Panc1 (cell line): ENCODE measurements at regions of chr10 and their contacts with region 1.

Region 1: DNA sequence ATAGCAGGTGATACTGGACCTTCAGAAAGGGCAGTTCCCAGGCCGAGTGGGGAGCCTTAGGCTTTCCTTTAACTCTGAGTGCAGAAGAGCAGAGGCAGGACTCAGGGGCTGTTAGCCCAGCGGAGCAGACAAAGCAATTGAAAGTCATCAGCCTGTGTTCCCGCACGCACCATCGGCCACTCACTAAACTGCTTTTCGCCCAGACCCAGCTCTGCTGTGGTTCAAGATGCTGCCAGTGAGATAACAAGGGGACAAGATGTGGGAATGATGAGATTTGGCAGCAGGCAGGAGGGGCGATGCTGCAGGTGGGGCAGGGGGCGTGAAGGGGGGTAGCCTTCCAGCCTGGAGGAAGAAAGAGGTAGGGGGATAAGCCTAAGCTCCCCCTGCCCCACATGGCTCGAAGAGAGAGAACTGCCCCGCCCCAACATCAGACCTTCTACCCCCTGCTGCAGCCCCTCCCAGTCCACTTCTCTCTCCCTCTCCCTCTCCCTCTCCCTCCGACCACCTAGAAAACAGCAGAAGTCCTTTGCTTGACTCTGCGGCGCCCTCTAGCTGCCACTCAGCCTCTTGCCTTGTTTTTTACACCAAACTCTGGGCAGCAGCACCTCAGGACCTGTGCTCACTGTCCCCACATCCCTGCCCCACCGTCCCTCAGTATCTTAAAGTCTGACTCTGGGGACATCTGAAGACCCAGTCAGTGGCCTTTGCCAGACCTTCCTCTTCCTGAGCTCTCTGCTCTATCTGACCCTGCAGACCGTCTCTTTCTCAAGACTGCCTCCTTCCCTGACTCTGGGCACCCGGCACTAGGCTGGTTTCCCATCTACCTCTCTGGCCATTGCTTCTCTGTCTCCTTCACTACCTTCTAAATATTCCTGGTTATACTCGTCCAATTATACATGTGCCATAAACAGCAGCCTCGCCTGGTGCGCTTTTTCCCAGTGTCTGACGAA is 110.5 kb downstream of the C10orf105 start:
- DNase-seq: no peak
- ATAC-seq: peak; percentile 75
- H3K4me3 ChIP-seq: no peak overlapping the region
- H3K27ac ChIP-seq: no peak overlapping the region
- H3K4me1 ChIP-seq: no peaks in the 10 kb centered on the region
- H3K27me3 ChIP-seq: no peaks in the 10 kb centered on the region; the same call in 1 of the 2 replicates
- CTCF ChIP-seq: peak; percentile 97

Region 2: GRCh38 chr10:71314028-71314693 is 294.9 kb before region 1 on chr10:
- CTCF ChIA-PET with region 1: no interaction called
- POLR2A ChIA-PET with region 1: no interaction called
- in situ Hi-C with region 1: no loop called
- intact Hi-C with region 1: loop called (anchors 5 kb)
- DNase-seq: peak; percentile 43
- ATAC-seq: peak; percentile 78
- H3K4me3 ChIP-seq: peak overlapping the region; percentile 23 to 38
- H3K27ac ChIP-seq: peak overlapping the region; percentile 67; the same call in 1 of the 2 replicates
- H3K4me1 ChIP-seq: peaks cover 3% of the 10 kb centered on the region
- H3K27me3 ChIP-seq: no peaks in the 10 kb centered on the region; the same call in 1 of the 2 replicates
- CTCF ChIP-seq: peak; percentile 98

Region 3: DNA sequence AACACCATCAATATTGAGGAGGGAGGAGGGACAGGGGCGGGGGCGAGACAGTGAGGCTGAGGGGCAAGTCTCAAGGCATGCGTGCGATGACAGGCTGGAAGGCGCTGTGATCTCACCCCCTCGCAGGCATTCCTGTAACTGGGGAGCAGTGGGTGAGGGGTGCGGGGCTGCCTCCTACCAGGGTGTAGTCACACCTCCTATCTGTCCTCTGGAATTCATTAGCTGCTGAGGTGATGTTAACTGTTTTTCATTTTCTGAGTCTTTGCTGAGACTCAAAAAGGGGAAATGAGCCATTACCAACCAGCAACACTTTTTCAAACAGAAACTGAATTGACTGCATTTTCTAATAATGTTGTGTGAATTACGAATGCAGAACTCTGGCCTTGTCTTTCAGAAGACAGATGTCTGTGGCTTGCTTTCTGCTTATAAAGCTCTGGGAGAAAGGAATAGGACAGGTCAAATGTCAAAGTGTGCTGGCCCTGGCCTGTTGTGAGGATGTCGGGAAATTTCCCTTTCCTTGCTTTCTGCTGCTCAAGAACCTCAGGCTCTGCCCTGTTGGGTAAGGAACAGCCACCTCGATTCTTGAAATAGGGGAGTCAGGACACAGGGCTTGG is 236.1 kb before region 1 on chr10:
- CTCF ChIA-PET with region 1: interaction called, 19 read pairs
- POLR2A ChIA-PET with region 1: no interaction called
- in situ Hi-C with region 1: no loop called
- intact Hi-C with region 1: no loop called
- DNase-seq: no peak
- ATAC-seq: no peak
- H3K4me3 ChIP-seq: no peak overlapping the region
- H3K27ac ChIP-seq: no peak overlapping the region
- H3K4me1 ChIP-seq: peaks cover 7% of the 10 kb centered on the region; the same call in 1 of the 2 replicates
- H3K27me3 ChIP-seq: peaks cover 8% of the 10 kb centered on the region; the same call in 1 of the 2 replicates
- CTCF ChIP-seq: no peak

Region 4: DNA sequence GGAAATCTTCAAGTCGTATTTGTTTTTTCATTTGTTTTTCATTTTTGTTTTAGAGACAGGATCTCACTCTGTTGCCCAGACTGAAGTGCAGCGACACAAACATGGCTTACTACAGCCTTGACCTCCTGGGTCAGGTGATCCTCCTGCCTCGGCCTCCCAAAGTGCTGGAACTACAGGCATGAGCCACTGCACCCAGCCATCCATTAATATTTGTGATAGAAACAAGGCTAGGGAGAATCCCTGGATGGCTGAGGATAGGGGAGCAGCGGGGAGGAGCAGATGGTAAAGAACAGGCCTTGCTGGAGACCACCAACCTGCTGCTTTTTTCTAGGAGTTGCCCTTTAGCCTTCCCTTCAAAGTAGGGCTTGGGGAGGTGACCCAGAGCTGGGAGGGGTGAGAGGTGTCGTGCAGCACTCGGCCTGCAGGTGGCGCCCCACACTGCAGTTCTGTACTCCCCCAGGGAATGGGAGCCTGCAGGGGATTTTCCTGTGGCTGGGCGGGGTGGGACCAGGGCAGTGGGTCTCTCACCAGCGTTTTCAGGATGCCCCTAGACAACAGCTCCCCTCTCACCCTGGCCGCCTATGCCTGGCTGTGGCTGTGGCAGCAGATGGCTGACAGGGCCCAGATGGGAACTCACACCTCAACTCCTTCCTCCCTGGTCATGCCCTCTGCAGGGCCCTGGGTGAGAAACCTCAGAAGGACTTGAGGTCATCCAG is 225.0 kb before region 1 on chr10:
- CTCF ChIA-PET with region 1: interaction called, 10 read pairs
- POLR2A ChIA-PET with region 1: no interaction called
- in situ Hi-C with region 1: no loop called
- intact Hi-C with region 1: loop called (anchors 2 kb)
- DNase-seq: peak; percentile 45
- ATAC-seq: peak; percentile 96
- H3K4me3 ChIP-seq: no peak overlapping the region
- H3K27ac ChIP-seq: no peak overlapping the region
- H3K4me1 ChIP-seq: no peaks in the 10 kb centered on the region
- H3K27me3 ChIP-seq: peaks cover 2% of the 10 kb centered on the region; the same call in 1 of the 2 replicates
- CTCF ChIP-seq: peak; percentile 99

Region 5: GRCh38 chr10:71623098-71623985 is 14.2 kb after region 1 on chr10:
- CTCF ChIA-PET with region 1: interaction called, 16 read pairs
- POLR2A ChIA-PET with region 1: no interaction called
- in situ Hi-C with region 1: no loop called
- intact Hi-C with region 1: no loop called
- DNase-seq: no peak
- ATAC-seq: peak; percentile 82
- H3K4me3 ChIP-seq: no peak overlapping the region
- H3K27ac ChIP-seq: no peak overlapping the region; the same call in 1 of the 2 replicates
- H3K4me1 ChIP-seq: peaks cover 23% of the 10 kb centered on the region
- H3K27me3 ChIP-seq: no peaks in the 10 kb centered on the region
- CTCF ChIP-seq: no peak; the same call in 1 of the 2 replicates

Region 6: DNA sequence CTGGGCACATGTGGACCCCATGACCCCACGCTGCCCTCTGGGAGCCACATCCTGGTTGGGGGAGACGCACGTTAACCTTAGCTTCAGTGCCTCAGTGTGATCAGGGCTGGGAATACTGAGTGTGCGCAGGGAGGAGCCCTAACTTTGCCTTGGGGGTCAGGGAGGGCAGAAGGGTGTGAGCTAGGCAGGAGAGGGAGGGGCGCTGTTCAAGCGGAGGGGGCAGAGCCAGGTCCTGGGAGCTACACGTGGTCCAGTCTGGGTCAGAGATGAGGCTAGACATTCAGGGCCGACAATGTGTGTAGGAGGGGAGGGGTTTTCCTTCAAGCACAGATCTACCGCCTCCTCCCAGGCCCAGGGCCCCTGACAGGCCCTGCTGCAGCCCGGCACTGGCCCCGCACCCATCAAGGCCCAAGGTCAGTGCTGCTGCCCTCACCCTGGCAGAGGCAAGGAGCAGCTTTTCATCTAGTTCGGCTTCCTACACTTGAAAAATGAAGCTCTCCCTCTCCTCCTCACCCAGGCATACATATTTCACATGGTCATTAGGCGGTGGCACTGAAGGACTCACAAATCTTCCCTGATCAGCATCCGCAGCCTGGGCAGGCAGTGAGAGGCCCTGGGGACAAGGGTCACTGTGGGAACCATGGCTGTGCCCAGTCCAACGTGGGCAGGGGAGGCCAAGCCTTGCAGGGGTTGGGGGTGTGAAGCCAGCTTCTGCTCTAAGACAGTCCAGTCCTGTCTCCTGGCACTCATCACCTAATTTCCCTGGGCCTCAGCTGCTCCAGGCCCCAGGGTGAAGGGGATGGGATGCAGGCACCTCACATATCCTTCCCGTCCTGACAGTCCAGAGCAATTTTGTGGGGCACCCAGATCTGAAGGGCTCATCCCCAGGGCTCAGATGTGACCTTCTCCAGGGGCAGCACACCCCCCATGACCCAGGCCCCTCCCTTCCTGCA is 63.2 kb after region 1 on chr10:
- CTCF ChIA-PET with region 1: no interaction called
- POLR2A ChIA-PET with region 1: no interaction called
- in situ Hi-C with region 1: no loop called
- intact Hi-C with region 1: no loop called
- DNase-seq: no peak
- ATAC-seq: peak; percentile 51
- H3K4me3 ChIP-seq: no peak overlapping the region
- H3K27ac ChIP-seq: no peak overlapping the region
- H3K4me1 ChIP-seq: no peaks in the 10 kb centered on the region
- H3K27me3 ChIP-seq: no peaks in the 10 kb centered on the region
- CTCF ChIP-seq: no peak

Region 7: GRCh38 chr10:71805776-71806703 is 196.9 kb after region 1 on chr10:
- CTCF ChIA-PET with region 1: no interaction called
- POLR2A ChIA-PET with region 1: no interaction called
- in situ Hi-C with region 1: no loop called
- intact Hi-C with region 1: no loop called
- DNase-seq: no peak
- ATAC-seq: peak; percentile 14; the same call in 1 of the 2 replicates
- H3K4me3 ChIP-seq: no peak overlapping the region
- H3K27ac ChIP-seq: no peak overlapping the region
- H3K4me1 ChIP-seq: no peaks in the 10 kb centered on the region; the same call in 1 of the 2 replicates
- H3K27me3 ChIP-seq: no peaks in the 10 kb centered on the region
- CTCF ChIP-seq: no peak